ENCODE measurements at regions of chr10 and their contacts with region 1.

Region 1: GRCh38 chr10:13348216-13349017 is at the start of gene SEPHS1:
- DNase-seq: peak; percentile 92
- H3K4me3 ChIP-seq: peak within 1 kb of the TSS; percentile 86
- H3K27ac ChIP-seq: peak within 1 kb of the TSS; percentile 95
- H3K4me1 ChIP-seq: peaks cover 44% of the 10 kb centered on the region
- CTCF ChIP-seq: 0 out of 2 replicates have a peak, but pooled peaks have one; percentile 36
- total RNA-seq, gene SEPHS1: 72.7 and 115 TPM in 2 replicates

Region 2: GRCh38 chr10:13160934-13161856 is 187.2 kb before region 1 on chr10 and contains the start of gene MCM10:
- CTCF ChIA-PET with region 1: no interaction called
- POLR2A ChIA-PET with region 1: no interaction called
- intact Hi-C with region 1: loop called (anchors 1 kb)
- DNase-seq: peak; percentile 100
- H3K4me3 ChIP-seq: peak within 1 kb of the TSS; percentile 80
- H3K27ac ChIP-seq: peak within 1 kb of the TSS; percentile 24
- H3K4me1 ChIP-seq: peaks cover 30% of the 10 kb centered on the region
- CTCF ChIP-seq: peak; percentile 90
- total RNA-seq, gene MCM10: 56.9 and 63.9 TPM in 2 replicates

Region 3: DNA sequence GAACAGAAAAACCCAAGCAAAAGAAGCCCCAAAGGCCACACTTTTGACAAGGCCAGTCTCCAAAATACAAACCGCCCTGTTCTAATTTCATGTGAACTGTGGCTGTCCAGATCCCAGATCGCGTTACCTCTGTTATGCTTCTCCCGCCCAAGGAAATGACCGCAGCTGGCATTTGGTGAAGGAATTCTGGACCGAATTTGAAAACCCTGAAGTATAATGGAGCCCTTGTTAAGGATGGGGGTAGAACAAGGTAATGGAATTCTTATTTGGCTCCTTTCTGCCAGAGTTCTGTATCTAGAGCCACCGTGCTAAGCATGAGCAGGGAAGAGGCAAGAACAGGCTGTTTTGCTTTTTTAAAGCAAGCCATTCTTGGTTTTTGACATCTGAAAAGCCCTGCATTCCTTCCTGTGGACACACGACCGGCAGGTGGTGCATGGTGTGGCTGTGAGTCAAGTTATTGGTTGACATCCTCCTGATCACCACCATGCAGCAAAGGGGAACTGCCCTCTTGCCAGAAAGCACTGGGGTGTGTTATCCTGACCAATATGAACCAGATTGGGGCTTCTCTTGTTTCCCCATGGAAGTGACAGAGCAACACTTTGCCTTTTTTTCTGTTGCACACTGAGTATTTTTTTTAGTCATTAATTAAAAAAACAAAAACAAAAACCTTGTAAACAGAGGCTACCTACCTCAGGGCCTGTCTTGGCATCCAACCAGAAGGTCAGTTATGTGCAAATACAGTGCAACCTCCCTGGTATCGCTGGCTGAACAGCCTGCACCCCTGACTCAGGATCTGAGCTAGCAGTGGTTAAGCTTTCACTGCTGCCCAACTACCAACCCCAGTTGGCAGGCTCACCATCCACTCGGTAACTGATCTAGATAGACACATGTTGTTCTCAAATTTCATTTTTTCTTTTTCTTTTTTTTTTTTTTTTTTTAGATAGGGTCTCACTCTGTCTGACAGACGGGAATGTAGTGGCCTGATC is 128.4 kb before region 1 on chr10:
- CTCF ChIA-PET with region 1: no interaction called
- POLR2A ChIA-PET with region 1: interaction called, 10 read pairs
- intact Hi-C with region 1: no loop called
- DNase-seq: peak; percentile 79
- H3K4me3 ChIP-seq: no peak overlapping the region
- H3K27ac ChIP-seq: no peak overlapping the region
- H3K4me1 ChIP-seq: peaks cover 11% of the 10 kb centered on the region
- CTCF ChIP-seq: peak; percentile 71

Region 4: DNA sequence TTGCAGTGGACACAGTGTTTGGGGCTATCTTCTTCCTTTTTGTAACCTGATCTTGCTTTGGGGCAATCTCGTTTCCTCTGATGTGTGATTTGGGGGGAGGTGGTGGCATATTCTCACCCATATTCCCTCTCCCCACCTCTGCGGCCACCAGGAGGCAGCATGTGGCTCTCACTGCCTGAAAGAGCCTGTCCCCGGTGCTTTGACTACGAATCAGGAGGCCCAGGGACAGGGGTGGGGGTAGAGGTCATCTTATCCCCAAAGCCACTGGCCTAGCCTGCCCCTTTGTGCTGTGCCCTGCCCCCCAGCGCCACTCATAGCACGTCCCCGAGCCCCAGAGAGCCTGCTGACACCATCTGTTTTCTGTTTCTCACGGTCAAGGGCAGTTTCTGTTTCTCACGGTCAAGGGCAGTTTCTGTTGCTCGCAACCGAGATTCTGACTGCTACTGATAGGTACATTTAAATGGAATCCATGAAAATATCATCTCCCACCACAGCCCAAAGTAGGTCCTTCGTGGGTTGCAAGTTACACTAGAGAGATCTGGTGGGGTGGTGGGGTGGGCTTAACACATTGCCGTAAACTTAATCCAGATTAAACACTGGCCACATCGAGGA is 76.8 kb before region 1 on chr10:
- CTCF ChIA-PET with region 1: no interaction called
- POLR2A ChIA-PET with region 1: interaction called, 3 read pairs
- intact Hi-C with region 1: loop called (anchors 2 kb)
- DNase-seq: peak; percentile 78
- H3K4me3 ChIP-seq: peak overlapping the region; percentile 41
- H3K27ac ChIP-seq: peak overlapping the region; percentile 97
- H3K4me1 ChIP-seq: peaks cover 50% of the 10 kb centered on the region
- CTCF ChIP-seq: peak; percentile 81

Region 5: DNA sequence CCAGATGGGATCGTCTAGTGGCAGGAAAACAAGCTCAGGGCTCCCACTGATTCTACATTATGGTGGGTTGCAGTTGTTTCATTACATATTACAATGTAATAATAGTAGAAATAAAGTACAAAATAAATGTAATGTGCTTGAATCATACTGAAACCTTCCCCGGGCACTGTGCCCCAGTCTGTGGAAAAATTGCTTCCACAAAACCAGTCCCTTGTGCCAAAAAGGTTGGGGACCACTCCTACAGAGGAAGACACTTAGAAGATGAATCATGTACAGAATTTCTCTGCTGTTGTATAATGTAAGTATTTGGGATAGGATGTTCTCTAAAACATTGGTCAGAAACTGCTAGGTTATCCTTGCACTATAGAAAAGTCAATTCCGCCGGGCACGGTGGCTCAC is 37.2 kb before region 1 on chr10:
- CTCF ChIA-PET with region 1: no interaction called
- POLR2A ChIA-PET with region 1: no interaction called
- intact Hi-C with region 1: no loop called
- DNase-seq: no peak
- H3K4me3 ChIP-seq: no peak overlapping the region
- H3K27ac ChIP-seq: no peak overlapping the region
- H3K4me1 ChIP-seq: no peaks in the 10 kb centered on the region
- CTCF ChIP-seq: no peak

Region 6: DNA sequence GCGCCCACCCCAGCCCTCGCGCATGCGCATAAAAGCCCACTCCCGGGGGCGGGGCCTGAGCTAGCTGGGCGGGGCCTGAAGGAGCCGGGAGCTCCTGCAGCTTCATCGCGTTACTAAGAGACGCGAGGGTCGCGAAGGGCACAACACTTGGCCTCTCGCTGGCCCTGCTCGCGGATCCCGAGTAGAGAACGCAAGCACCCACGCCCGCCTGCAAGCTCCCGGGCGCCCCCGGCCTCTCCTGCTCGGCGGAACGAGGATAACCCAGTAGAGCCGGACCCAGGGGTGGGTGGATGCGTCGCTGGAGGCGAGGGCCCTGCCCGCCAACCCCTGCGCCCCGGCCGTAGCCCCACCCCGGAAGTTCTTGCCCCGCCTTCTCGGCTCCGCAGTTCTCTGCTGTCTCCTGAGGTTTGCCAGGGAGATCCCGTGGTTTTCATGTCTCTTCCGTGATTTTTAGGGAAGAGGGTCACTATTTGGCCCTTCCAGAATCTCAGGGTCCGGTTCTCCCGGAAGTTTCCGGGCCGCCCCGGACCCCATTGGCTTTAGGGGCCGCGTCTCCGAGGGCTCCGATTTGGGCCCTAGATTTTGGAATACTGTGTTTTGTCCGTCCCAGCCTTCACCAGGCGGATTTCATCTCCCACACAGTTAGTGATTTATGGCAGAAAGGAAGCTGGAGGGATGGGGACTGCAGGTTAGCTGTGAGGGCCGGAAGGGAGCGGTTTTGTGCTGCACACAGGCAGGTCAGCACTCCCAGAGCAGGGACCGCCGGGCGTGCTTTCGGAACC is 1611.0 kb after region 1 on chr10 and contains the start of gene MEIG1:
- CTCF ChIA-PET with region 1: no interaction called
- POLR2A ChIA-PET with region 1: no interaction called
- intact Hi-C with region 1: loop called (anchors 10 kb)
- DNase-seq: peak; percentile 93
- H3K4me3 ChIP-seq: peak within 1 kb of the TSS; percentile 76
- H3K27ac ChIP-seq: peak within 1 kb of the TSS; percentile 94
- H3K4me1 ChIP-seq: peaks cover 43% of the 10 kb centered on the region
- CTCF ChIP-seq: no peak
- total RNA-seq, gene MEIG1: 1.1 and 2.5 TPM in 2 replicates

Measured in OCI-LY7 (cell line).